Ascending aorta (tissue), 2 donors: ENCODE measurements at regions of chrX and their contacts with region 1.

Region 1: GRCh38 chrX:48021026-48021900 is 14.5 kb downstream of the SPACA5 start:
- DNase-seq: peak in 1 of 2 donors; percentile 75
- H3K4me3 ChIP-seq: peak overlapping the region; percentile 55 to 61
- H3K27ac ChIP-seq: peak overlapping the region; percentile 82 to 87
- H3K4me1 ChIP-seq: peaks cover 0 to 2% of the 10 kb centered on the region in 2 donors
- H3K27me3 ChIP-seq: no peaks in the 10 kb centered on the region
- CTCF ChIP-seq: no peak

Region 2: GRCh38 chrX:47482512-47483309 is 538.6 kb before region 1 on chrX and contains the start of gene ZNF41:
- intact Hi-C with region 1: loop called (anchors 5 kb)
- DNase-seq: peak; percentile 18 to 82
- H3K4me3 ChIP-seq: peak within 1 kb of the TSS; percentile 58 to 77
- H3K27ac ChIP-seq: peak within 1 kb of the TSS; percentile 93 to 94
- H3K4me1 ChIP-seq: no peaks in the 10 kb centered on the region
- H3K27me3 ChIP-seq: no peaks in the 10 kb centered on the region
- CTCF ChIP-seq: no peak
- total RNA-seq, gene ZNF41: 2.7 TPM

Region 3: DNA sequence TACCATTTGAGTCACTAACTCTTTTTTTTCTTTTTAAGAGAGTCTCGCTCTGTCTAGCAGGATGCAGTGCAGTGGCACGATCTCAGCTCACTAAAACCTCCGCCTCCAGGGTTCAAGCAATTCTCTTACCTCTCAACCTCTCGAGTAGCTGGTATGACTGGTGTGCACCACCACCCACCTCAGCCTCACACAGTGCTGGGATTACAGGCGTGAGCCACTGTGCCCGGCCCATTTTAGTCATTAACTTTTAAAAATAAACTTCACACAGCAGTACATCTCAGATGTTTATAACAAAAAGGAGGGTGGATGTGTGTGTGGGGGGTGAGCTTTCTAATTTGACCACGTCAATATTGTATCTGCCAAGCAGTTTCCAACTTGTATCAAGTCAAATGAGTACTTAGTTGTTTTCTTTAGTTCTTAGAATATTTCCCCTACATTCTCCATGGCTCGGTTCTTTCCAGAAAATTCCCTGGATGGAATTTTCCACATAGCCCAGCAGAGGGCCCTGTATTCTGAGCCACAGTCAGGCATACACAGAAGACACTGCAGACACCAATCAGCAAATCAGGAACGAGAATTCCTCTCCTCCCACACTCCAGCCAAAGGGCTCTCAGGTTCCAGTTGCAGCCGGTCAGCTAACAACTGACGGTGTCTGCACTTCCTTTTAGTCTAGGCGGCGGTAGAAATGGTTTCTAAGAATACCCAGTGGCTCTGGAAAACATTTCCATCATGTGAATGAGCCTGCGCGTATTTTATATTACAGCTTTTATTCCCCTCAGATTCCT is 480.3 kb before region 1 on chrX:
- intact Hi-C with region 1: loop called (anchors 10 kb)
- DNase-seq: peak; percentile 54 to 90
- H3K4me3 ChIP-seq: no peak overlapping the region
- H3K27ac ChIP-seq: peak overlapping the region; percentile 82 to 88
- H3K4me1 ChIP-seq: peaks cover 0 to 6% of the 10 kb centered on the region in 2 donors
- H3K27me3 ChIP-seq: no peaks in the 10 kb centered on the region
- CTCF ChIP-seq: peak; percentile 38 to 44 (median 41)

Region 4: GRCh38 chrX:47836164-47837072 is 184.8 kb before region 1 on chrX and contains the start of gene ZNF81:
- intact Hi-C with region 1: loop called (anchors 5 kb)
- DNase-seq: peak; percentile 89 to 98
- H3K4me3 ChIP-seq: peak within 1 kb of the TSS; percentile 46 to 67
- H3K27ac ChIP-seq: peak within 1 kb of the TSS; percentile 44 to 48
- H3K4me1 ChIP-seq: no peaks in the 10 kb centered on the region
- H3K27me3 ChIP-seq: no peaks in the 10 kb centered on the region
- CTCF ChIP-seq: no peak
- total RNA-seq, gene ZNF81: 2.8 TPM

Region 5: GRCh38 chrX:47854474-47854873 is 166.8 kb before region 1 on chrX:
- intact Hi-C with region 1: loop called (anchors 5 kb)
- DNase-seq: no peak
- H3K4me3 ChIP-seq: no peak overlapping the region
- H3K27ac ChIP-seq: no peak overlapping the region
- H3K4me1 ChIP-seq: no peaks in the 10 kb centered on the region
- H3K27me3 ChIP-seq: no peaks in the 10 kb centered on the region
- CTCF ChIP-seq: peak in 2 of 3 experiments; percentile 10 to 33

Region 6: DNA sequence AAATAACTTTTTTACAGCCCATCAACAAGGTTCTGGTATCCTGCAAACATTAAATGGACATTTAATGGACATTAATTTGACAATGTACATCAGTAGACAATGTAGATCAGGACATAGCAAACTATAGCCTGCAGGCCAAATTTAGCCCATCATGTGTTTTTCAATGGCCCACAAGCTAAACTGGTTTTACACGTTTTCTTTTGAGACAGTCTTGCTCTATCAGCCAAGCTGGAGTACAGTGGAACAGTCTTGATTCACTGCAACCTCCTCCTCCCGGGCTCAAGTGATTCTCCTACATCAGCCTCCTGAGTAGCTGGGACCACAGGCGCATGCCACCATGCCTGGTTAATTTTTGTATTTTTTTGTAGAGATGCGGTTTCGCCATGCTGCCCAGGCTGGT is 43.0 kb after region 1 on chrX:
- intact Hi-C with region 1: no loop called
- DNase-seq: no peak
- H3K4me3 ChIP-seq: no peak overlapping the region
- H3K27ac ChIP-seq: no peak overlapping the region
- H3K4me1 ChIP-seq: no peaks in the 10 kb centered on the region
- H3K27me3 ChIP-seq: no peaks in the 10 kb centered on the region
- CTCF ChIP-seq: no peak

Region 7: DNA sequence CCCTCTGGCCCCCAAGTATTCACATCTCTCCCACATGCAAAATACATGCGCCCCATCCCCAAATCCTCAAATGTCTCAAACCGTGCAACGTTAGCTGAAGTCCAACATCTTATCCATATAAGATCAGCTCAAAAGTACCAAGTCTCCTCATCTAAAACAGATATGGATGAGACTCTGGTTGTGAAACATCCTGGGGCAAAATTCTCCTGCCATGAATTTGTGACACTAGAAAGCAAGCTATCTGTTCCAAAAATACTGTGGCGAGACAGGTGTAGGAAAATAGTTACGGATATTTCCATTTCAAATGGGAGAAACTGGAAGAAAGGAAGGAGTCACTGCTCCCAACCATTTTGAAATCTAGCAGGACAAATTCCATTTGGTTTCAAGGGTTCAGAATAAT is 122.4 kb after region 1 on chrX:
- intact Hi-C with region 1: no loop called
- DNase-seq: no peak
- H3K4me3 ChIP-seq: no peak overlapping the region
- H3K27ac ChIP-seq: no peak overlapping the region
- H3K4me1 ChIP-seq: no peaks in the 10 kb centered on the region
- H3K27me3 ChIP-seq: no peaks in the 10 kb centered on the region
- CTCF ChIP-seq: no peak